CD4-positive, alpha-beta T cell (primary cell): ENCODE measurements at regions of chr17 and their contacts with region 1.

Region 1: GRCh38 chr17:2054512-2055291 is at the start of gene HIC1:
- DNase-seq: peak; percentile 48 to 90 (median 76)
- ATAC-seq: peak; percentile 54
- H3K4me3 ChIP-seq: peak within 1 kb of the TSS; percentile 54
- H3K4me3 Mint-ChIP-seq: peak within 1 kb of the TSS; percentile 87
- H3K27ac ChIP-seq: peak within 1 kb of the TSS; percentile 48 to 64
- H3K27ac Mint-ChIP-seq: peak within 1 kb of the TSS; percentile 83
- H3K4me1 ChIP-seq: peaks cover 74% of the 10 kb centered on the region
- H3K4me1 Mint-ChIP-seq: peaks cover 36% of the 10 kb centered on the region
- H3K27me3 ChIP-seq: peaks cover 3 to 6% of the 10 kb centered on the region in 2 experiments
- H3K27me3 Mint-ChIP-seq: peaks cover 14% of the 10 kb centered on the region
- CTCF ChIP-seq: peak; percentile 88
- total RNA-seq, gene HIC1: 2.4 to 3.0 TPM

Region 2: GRCh38 chr17:2157675-2158395 is 103.1 kb after region 1 on chr17:
- CTCF ChIA-PET with region 1: interaction called, 4 read pairs
- POLR2A ChIA-PET with region 1: no interaction called
- intact Hi-C with region 1: loop called in 1 of 2 experiments (anchors 10 kb)
- DNase-seq: peak in 2 of 14 experiments; percentile 63 to 66
- ATAC-seq: no peak
- H3K4me3 ChIP-seq: no peak overlapping the region
- H3K4me3 Mint-ChIP-seq: no peak overlapping the region
- H3K27ac ChIP-seq: no peak overlapping the region
- H3K27ac Mint-ChIP-seq: no peak overlapping the region
- H3K4me1 ChIP-seq: no peaks in the 10 kb centered on the region
- H3K4me1 Mint-ChIP-seq: peaks cover 5% of the 10 kb centered on the region
- H3K27me3 ChIP-seq: no peaks in the 10 kb centered on the region
- H3K27me3 Mint-ChIP-seq: no peaks in the 10 kb centered on the region
- CTCF ChIP-seq: no peak

Region 3: GRCh38 chr17:2244545-2245525 is 190.1 kb after region 1 on chr17:
- CTCF ChIA-PET with region 1: interaction called, 83 read pairs
- POLR2A ChIA-PET with region 1: interaction called, 61 read pairs
- intact Hi-C with region 1: loop called (anchors 1 kb)
- DNase-seq: peak; percentile 73 to 91 (median 82)
- ATAC-seq: peak; percentile 96
- H3K4me3 ChIP-seq: no peak overlapping the region
- H3K4me3 Mint-ChIP-seq: no peak overlapping the region
- H3K27ac ChIP-seq: no peak overlapping the region
- H3K27ac Mint-ChIP-seq: peak overlapping the region; percentile 57
- H3K4me1 ChIP-seq: peaks cover 11% of the 10 kb centered on the region
- H3K4me1 Mint-ChIP-seq: peaks cover 40% of the 10 kb centered on the region
- H3K27me3 ChIP-seq: no peaks in the 10 kb centered on the region
- H3K27me3 Mint-ChIP-seq: no peaks in the 10 kb centered on the region
- CTCF ChIP-seq: peak; percentile 94

Region 4: GRCh38 chr17:2266045-2266864 is 211.6 kb after region 1 on chr17:
- CTCF ChIA-PET with region 1: interaction called, 5 read pairs
- POLR2A ChIA-PET with region 1: interaction called, 13 read pairs
- intact Hi-C with region 1: loop called (anchors 5 kb)
- DNase-seq: peak; percentile 55 to 96 (median 71)
- ATAC-seq: peak; percentile 80
- H3K4me3 ChIP-seq: peak overlapping the region; percentile 36
- H3K4me3 Mint-ChIP-seq: peak overlapping the region; percentile 67
- H3K27ac ChIP-seq: peak overlapping the region; percentile 83 to 84
- H3K27ac Mint-ChIP-seq: peak overlapping the region; percentile 98
- H3K4me1 ChIP-seq: peaks cover 87% of the 10 kb centered on the region
- H3K4me1 Mint-ChIP-seq: peaks cover 85% of the 10 kb centered on the region
- H3K27me3 ChIP-seq: no peaks in the 10 kb centered on the region
- H3K27me3 Mint-ChIP-seq: no peaks in the 10 kb centered on the region
- CTCF ChIP-seq: no peak

Region 5: GRCh38 chr17:2303204-2304188 is 248.8 kb after region 1 on chr17 and contains the starts of genes SMG6 and SRR:
- CTCF ChIA-PET with region 1: no interaction called
- POLR2A ChIA-PET with region 1: interaction called, 4 read pairs
- intact Hi-C with region 1: loop called in 1 of 2 experiments (anchors 5 kb)
- DNase-seq: peak; percentile 91 to 98 (median 95)
- ATAC-seq: peak; percentile 91
- H3K4me3 ChIP-seq: peak within 1 kb of the TSS; percentile 94
- H3K4me3 Mint-ChIP-seq: peak within 1 kb of the TSS; percentile 98
- H3K27ac ChIP-seq: peak within 1 kb of the TSS; percentile 52 to 84
- H3K27ac Mint-ChIP-seq: peak within 1 kb of the TSS; percentile 90
- H3K4me1 ChIP-seq: peaks cover 30% of the 10 kb centered on the region
- H3K4me1 Mint-ChIP-seq: peaks cover 55% of the 10 kb centered on the region
- H3K27me3 ChIP-seq: no peaks in the 10 kb centered on the region
- H3K27me3 Mint-ChIP-seq: no peaks in the 10 kb centered on the region
- CTCF ChIP-seq: no peak
- total RNA-seq, gene SMG6: 39.3 to 39.7 TPM
- total RNA-seq, gene SRR: 2.5 to 2.8 TPM

Region 6: GRCh38 chr17:2347547-2348307 is 293.0 kb after region 1 on chr17:
- CTCF ChIA-PET with region 1: no interaction called
- POLR2A ChIA-PET with region 1: no interaction called
- intact Hi-C with region 1: loop called (anchors 2 kb)
- DNase-seq: no peak
- ATAC-seq: no peak
- H3K4me3 ChIP-seq: no peak overlapping the region
- H3K4me3 Mint-ChIP-seq: no peak overlapping the region
- H3K27ac ChIP-seq: no peak overlapping the region
- H3K27ac Mint-ChIP-seq: no peak overlapping the region
- H3K4me1 ChIP-seq: peaks cover 8% of the 10 kb centered on the region
- H3K4me1 Mint-ChIP-seq: peaks cover 6% of the 10 kb centered on the region
- H3K27me3 ChIP-seq: no peaks in the 10 kb centered on the region
- H3K27me3 Mint-ChIP-seq: no peaks in the 10 kb centered on the region
- CTCF ChIP-seq: no peak